ENCODE measurements at regions of chr2 and their contacts with region 1.

Region 1: GRCh38 chr2:190804182-190804795 is 76.3 kb upstream of the GLS start:
- DNase-seq: no peak
- H3K4me3 Mint-ChIP-seq: no peak overlapping the region
- H3K27ac Mint-ChIP-seq: no peak overlapping the region
- H3K4me1 Mint-ChIP-seq: peaks cover 23% of the 10 kb centered on the region
- H3K27me3 Mint-ChIP-seq: no peaks in the 10 kb centered on the region

Region 2: GRCh38 chr2:190636373-190636772 is 167.9 kb before region 1 on chr2:
- CTCF ChIA-PET with region 1: interaction called, 4 read pairs
- intact Hi-C with region 1: loop called (anchors 1 kb)
- DNase-seq: no peak
- H3K4me3 Mint-ChIP-seq: no peak overlapping the region
- H3K27ac Mint-ChIP-seq: no peak overlapping the region
- H3K4me1 Mint-ChIP-seq: peaks cover 9% of the 10 kb centered on the region
- H3K27me3 Mint-ChIP-seq: no peaks in the 10 kb centered on the region

Region 3: DNA sequence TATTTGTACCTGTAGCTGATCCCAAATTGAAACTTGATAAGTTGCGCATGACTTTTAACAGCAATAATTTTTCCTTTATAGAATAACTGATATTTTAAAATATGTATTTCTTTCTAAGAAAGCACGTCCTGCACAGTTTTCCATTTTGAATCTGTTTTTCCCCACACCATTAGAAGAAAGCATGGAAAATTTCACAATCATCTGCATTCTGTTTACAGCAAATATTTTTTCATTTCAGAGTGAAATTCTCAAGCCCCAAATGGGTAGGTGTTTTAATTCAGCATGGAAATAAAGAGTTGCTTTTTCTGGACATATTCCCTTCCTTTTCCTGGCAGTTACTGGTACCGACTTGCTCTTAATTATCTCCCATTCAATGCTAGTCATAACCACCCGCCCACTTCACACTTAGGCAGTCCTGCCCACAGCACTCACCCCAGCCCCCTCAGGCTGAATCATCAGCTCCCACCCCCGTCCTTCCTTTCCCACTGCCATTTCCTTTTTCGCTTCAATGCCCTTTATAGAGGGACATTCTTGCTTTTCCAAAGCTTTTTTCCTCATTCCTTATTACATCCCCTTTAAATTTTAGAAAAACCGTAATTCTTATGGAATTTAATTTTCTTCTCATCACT is 12.8 kb before region 1 on chr2:
- CTCF ChIA-PET with region 1: interaction called, 8 read pairs
- intact Hi-C with region 1: loop called (anchors 1 kb)
- DNase-seq: peak; percentile 67
- H3K4me3 Mint-ChIP-seq: no peak overlapping the region
- H3K27ac Mint-ChIP-seq: peak overlapping the region; percentile 83
- H3K4me1 Mint-ChIP-seq: peaks cover 55% of the 10 kb centered on the region
- H3K27me3 Mint-ChIP-seq: no peaks in the 10 kb centered on the region

Measured in activated naive CD4-positive, alpha-beta T cell treated with anti-CD3 and anti-CD28 coated beads for 36 hours (primary cell).